Vagina (tissue), 2 donors: ENCODE measurements at regions of chr9 and their contacts with region 1.

Region 1: DNA sequence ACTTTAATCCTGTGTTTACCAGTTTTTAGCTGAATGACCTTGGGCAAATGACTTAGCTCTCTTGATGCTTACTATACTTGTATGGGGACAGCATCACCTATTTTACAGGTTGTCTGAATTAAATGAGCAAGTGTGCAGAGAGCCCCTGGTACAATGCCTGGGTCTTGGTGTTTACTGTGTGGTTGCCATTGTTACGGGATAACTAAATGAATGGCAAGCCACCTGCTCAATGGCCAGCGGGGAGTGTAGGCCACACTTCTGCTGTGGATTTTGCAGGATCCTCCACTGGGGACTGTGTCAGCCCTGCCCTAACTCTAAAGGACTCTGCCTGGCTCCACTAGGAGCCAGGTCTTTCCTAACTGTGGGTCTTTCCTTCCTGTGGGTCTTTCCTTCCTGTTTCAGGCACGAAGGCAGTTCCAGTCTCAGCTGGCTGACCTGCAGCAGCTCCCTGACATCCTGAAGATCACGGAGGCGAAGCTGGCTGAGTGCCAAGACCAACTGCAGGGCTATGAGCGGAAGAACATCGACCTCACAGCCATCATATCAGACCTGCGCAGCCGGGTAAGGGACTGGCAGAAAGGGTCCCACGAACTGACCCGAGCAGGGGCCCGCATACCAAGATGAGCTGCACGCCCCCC is 10.3 kb upstream of the GLE1 start:
- DNase-seq: no peak
- H3K4me3 ChIP-seq: no peak overlapping the region
- H3K27ac ChIP-seq: no peak overlapping the region
- H3K4me1 ChIP-seq: peaks cover 8% of the 10 kb centered on the region
- H3K27me3 ChIP-seq: no peaks in the 10 kb centered on the region
- CTCF ChIP-seq: no peak
- POLR2A ChIP-seq: no peak

Region 2: DNA sequence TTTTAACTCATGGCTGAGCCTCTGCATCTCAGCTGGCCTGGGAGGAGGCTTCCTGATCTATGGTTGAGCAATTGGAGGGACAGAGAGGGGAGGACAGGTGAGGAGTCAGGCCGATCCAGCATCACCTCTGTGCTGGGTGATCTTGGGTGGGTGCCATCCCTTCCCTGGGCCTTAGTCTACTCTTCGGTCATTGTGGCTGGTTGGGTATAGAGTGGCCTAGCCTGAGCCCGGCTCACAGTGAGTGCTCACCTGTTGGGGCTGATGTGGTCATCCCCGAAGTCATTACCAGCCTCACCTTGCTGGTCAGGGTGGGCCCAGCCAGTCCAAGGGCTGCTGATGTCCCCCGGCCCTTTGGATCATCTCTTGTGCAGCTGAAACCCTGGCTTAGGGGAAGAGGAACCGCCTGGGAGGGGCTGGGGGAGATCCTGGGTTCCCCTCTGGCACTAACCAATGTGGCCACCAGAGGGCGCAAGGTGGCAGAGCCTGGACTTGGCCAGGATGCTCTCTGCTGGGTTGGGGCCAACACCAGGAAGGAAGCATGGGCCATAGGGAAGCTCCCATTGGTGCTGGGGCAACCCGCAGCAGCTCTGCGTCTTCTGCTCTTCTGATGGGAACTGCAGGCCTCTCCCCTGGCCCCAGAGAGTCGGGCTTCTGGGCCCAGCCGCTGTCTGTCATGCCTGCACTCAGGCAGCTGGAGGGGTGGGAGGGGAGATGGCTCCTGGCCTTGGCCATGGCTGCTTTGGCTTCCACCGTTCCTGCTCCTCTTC is 55.7 kb before region 1 on chr9:
- intact Hi-C with region 1: loop called (anchors 10 kb)
- DNase-seq: no peak
- H3K4me3 ChIP-seq: no peak overlapping the region
- H3K27ac ChIP-seq: peak overlapping the region; percentile 13
- H3K4me1 ChIP-seq: peaks cover 9% of the 10 kb centered on the region
- H3K27me3 ChIP-seq: no peaks in the 10 kb centered on the region
- CTCF ChIP-seq: peak; percentile 84 to 93 (median 88)
- POLR2A ChIP-seq: no peak

Region 3: GRCh38 chr9:128455849-128456612 is 38.2 kb before region 1 on chr9 and contains the start of gene ODF2:
- intact Hi-C with region 1: no loop called
- DNase-seq: peak in 1 of 2 donors; percentile 96
- H3K4me3 ChIP-seq: peak within 1 kb of the TSS; percentile 80 to 85
- H3K27ac ChIP-seq: peak within 1 kb of the TSS; percentile 61
- H3K4me1 ChIP-seq: peaks cover 15% of the 10 kb centered on the region
- H3K27me3 ChIP-seq: no peaks in the 10 kb centered on the region
- CTCF ChIP-seq: no peak
- POLR2A ChIP-seq: no peak
- total RNA-seq, gene ODF2: 18.9 TPM

Region 4: DNA sequence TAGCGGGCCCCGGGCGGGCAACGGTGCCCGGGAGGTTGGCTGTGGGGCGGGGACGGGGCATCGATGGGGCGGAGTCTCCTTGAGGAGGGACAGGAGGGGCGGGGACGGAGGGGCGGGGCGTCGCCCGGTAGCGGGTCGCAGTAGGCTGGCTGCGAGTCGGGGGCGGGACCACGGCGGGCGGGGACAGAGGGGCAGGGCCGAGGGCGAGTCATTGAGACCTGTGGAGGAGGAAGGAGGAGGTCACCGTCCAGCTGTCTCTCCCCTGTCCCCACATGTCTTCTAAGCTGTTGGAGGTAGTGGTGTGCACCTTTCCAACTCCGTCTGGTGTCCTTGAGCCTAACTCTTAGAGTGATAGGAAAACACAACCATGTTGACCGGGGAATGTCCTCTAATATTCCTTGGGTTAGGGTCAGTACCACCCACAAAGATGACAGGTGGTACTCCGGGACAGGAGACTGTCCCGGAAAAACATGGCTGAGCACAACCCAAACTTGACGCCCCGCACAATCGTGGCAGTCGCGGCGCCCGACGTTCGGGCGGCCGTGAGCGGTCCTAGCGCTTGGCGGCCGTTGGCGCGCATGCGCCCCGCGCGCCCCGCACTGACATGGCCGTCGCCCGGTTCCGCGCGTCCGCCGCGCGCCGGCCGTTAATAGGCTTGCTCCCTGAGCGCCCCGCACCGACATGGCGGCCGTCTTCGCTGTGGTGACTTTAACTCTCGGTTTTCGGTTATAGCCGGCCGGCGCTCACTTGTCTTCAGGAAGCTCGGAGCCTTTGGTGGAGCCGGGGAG is 616.7 kb after region 1 on chr9 and contains the starts of genes CRAT and PTPA:
- intact Hi-C with region 1: no loop called
- DNase-seq: peak in 1 of 2 donors; percentile 96
- H3K4me3 ChIP-seq: peak within 1 kb of the TSS; percentile 74 to 100
- H3K27ac ChIP-seq: peak within 1 kb of the TSS; percentile 91
- H3K4me1 ChIP-seq: peaks cover 48% of the 10 kb centered on the region
- H3K27me3 ChIP-seq: no peaks in the 10 kb centered on the region
- CTCF ChIP-seq: no peak
- POLR2A ChIP-seq: peak; percentile 47 to 90
- total RNA-seq, gene CRAT: 59.9 TPM
- total RNA-seq, gene PTPA: 46.2 TPM